H1 (cell line): ENCODE measurements at regions of chr17 and their contacts with region 1.

Region 1: GRCh38 chr17:78092794-78093324 is 35.7 kb downstream of the TMC6 start:
- DNase-seq: no peak
- H3K4me3 ChIP-seq: no peak overlapping the region
- H3K27ac ChIP-seq: no peak overlapping the region
- H3K4me1 ChIP-seq: no peaks in the 10 kb centered on the region
- H3K27me3 ChIP-seq: no peaks in the 10 kb centered on the region
- CTCF ChIP-seq: no peak
- EP300 ChIP-seq: no peak
- POLR2A ChIP-seq: no peak
- RAD21 ChIP-seq: no peak

Region 2: GRCh38 chr17:78133971-78134898 is 41.4 kb after region 1 on chr17:
- CTCF ChIA-PET with region 1: interaction called, 12 read pairs
- POLR2A ChIA-PET with region 1: no interaction called
- DNase-seq: peak; percentile 72 to 87
- H3K4me3 ChIP-seq: no peak overlapping the region; a peak in 1 of 8 replicates
- H3K27ac ChIP-seq: no peak overlapping the region
- H3K4me1 ChIP-seq: peaks cover 0 to 22% (median 7%) of the 10 kb centered on the region in 4 experiments; a peak in 5 of 7 replicates
- H3K27me3 ChIP-seq: peaks cover 0 to 26% (median 17%) of the 10 kb centered on the region in 4 experiments; a peak in 5 of 7 replicates
- CTCF ChIP-seq: peak; percentile 87 to 95 (median 90)
- EP300 ChIP-seq: no peak
- POLR2A ChIP-seq: no peak
- RAD21 ChIP-seq: peak; percentile 65 to 82